GM12878 (cell line): ENCODE measurements at regions of chr9 and their contacts with region 1.

Region 1: DNA sequence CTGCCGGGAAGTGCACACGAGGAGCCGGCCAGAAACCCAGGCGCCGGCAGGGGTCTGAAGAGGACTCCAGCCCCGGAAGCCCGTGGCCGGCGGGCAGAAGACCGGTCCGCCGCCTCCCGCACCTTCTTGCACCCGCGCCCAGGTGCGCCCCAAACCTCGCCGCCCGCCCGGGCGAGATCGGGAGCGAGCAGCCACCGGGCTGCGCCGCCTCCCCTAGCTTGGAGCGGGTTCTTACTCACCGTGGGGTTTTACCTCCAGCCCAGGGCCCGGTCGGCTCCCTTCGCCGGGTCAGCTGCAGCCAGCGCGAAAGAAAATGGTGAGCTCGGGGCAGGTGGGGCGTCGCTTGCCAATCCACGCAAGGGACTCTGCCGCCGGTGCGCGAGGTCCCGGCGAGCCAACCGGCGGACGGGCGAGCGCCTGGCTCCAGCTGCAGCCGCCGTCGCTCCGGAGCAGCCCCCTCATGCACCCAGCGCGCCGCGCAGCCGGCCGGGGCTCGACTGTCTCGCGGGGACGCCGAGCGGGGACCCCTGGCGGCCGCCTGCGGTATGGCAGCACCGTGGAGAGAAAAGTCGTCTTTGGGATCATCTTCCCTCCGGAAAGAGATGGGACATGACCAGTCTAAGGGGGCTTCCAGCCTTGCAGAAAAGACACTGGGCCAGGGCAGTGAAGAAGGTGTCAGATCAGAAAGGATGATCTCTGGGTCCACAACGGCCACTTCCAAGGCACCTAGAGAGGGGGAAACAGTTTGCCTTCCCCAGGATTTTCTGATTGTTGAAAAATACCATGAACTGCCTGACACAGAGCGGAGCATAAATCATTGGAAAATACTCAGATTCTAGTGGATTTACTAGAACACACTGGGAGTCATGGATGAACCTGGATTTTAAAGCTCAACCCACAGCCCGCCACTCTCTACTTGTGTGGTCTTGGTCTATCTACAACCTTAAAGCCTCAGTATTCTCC is at the start of gene MOB3B:
- DNase-seq: no peak
- ATAC-seq: peak; percentile 85
- H3K4me3 ChIP-seq: peak within 1 kb of the TSS; percentile 85
- H3K27ac ChIP-seq: peak within 1 kb of the TSS; percentile 33; the same call in 1 of the 2 replicates
- H3K4me1 ChIP-seq: no peaks in the 10 kb centered on the region; the same call in none of the 2 replicates
- H3K27me3 ChIP-seq: no peaks in the 10 kb centered on the region
- CTCF ChIP-seq: peak; percentile 83 to 89 (median 88)
- EP300 ChIP-seq: no peak
- POLR2A ChIP-seq: 0 out of 2 replicates have a peak, but pooled peaks have one; percentile 35
- RAD21 ChIP-seq: peak; percentile 82
- polyA plus RNA-seq, gene MOB3B: 0.44 to 0.85 TPM

Region 2: DNA sequence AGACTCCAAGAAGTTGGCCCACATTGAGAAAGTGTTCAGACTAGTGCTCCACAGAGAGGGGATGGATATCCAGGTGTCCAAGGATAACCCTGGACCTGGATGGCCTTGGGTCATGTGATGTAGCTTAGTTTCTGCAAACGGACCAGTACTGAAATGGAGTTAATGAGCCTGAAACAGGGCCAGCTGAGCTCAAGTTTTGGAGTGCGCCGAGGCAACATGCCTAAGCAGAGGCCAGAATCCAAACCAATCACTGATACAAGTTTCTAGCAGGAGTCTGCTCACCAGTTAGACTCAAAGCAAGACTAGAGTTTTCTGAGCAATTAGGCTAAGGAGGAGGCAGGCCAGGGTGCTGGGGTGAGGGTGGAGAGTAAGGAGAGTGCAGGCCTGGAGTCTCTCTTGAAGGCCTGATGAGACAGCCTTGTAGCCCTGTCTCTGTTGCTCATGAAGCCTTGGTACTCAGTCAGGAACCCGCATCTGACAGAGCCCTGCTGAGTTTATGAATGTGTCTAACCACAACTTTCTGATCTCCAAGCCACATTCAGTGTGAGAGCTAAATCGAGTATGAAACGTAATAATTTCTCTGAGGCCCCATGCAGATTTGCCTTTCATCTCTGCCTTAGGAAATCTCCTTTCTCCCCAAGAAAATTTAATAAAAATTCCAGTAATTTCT is 163.8 kb before region 1 on chr9:
- CTCF ChIA-PET with region 1: interaction called, 15 read pairs
- POLR2A ChIA-PET with region 1: interaction called, 5 read pairs
- RAD21 ChIA-PET with region 1: interaction called, 16 read pairs
- SMC1A ChIA-PET with region 1: interaction called, 30 read pairs
- in situ Hi-C with region 1: no loop called
- intact Hi-C with region 1: no loop called
- DNase-seq: peak; percentile 74
- ATAC-seq: peak; percentile 91
- H3K4me3 ChIP-seq: peak overlapping the region; percentile 51; the same call in 1 of the 2 replicates
- H3K27ac ChIP-seq: peak overlapping the region; percentile 71
- H3K4me1 ChIP-seq: peaks cover 40% of the 10 kb centered on the region
- H3K27me3 ChIP-seq: no peaks in the 10 kb centered on the region; a peak in 1 of 4 replicates
- CTCF ChIP-seq: no peak
- EP300 ChIP-seq: 0 out of 4 replicates have a peak, but pooled peaks of 1 of the 2 experiments have one; percentile 10
- POLR2A ChIP-seq: no peak
- RAD21 ChIP-seq: no peak

Region 3: DNA sequence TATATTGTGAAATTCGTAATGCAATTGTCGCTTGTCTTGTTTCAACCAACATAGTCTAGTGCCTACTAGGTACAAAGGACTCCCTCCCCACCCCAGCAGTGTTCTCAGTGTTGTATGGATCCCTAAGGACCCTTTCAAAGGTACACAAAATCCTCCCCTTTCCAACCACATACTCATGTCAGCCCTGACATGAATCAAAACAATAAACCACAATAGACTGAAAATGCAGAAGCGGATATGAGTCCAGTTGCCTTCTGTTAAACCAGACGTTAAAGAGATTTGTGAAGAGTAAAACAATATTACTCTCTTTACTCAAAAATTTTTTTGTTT is 87.9 kb before region 1 on chr9:
- CTCF ChIA-PET with region 1: interaction called, 5 read pairs
- POLR2A ChIA-PET with region 1: no interaction called
- RAD21 ChIA-PET with region 1: no interaction called
- SMC1A ChIA-PET with region 1: no interaction called
- in situ Hi-C with region 1: no loop called
- intact Hi-C with region 1: loop called (anchors 5 kb)
- DNase-seq: peak; percentile 48
- ATAC-seq: peak; percentile 99
- H3K4me3 ChIP-seq: no peak overlapping the region
- H3K27ac ChIP-seq: no peak overlapping the region
- H3K4me1 ChIP-seq: peaks cover 9% of the 10 kb centered on the region
- H3K27me3 ChIP-seq: no peaks in the 10 kb centered on the region
- CTCF ChIP-seq: no peak
- EP300 ChIP-seq: peak; percentile 45 to 47; a peak in 2 of 4 replicates
- POLR2A ChIP-seq: no peak
- RAD21 ChIP-seq: no peak

Region 4: DNA sequence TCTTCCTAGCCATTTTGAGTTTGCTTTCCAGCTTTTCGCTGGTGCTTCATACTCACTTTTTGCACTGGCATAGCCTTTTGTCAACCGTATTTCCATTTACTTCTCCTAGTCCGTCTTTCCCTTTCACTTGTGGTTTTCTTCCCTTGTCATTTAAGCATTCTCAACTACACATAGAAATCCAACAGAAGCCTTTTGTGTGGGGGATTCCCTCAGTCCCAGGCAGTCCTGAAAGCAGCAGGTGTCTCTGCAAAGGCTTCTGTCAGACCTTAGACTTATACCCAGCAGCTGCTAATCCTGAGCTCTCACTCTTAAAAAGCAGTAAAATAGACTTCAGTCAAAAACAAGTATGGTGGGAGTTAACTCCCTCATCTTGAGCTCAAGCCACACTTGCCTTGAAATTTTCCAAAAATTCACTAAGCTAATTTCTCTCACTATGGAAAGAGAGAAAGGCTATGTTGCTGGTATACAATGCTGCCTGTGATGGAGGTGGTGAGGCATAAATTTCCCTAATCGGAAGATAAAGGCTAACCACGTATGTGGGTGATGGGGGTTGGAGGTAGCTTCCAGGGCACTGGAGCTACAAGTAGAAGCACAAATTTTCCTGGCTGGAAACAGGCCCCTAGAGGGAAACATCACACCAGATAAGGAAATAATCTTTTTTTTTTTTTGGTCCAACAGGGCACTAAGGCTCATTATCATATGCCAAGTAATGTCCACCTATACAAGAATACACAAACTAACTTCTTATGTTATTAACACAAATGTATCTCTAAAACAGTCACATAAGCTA is 40.3 kb before region 1 on chr9:
- CTCF ChIA-PET with region 1: interaction called, 18 read pairs
- POLR2A ChIA-PET with region 1: interaction called, 4 read pairs
- RAD21 ChIA-PET with region 1: interaction called, 5 read pairs
- SMC1A ChIA-PET with region 1: interaction called, 13 read pairs
- in situ Hi-C with region 1: no loop called
- intact Hi-C with region 1: no loop called
- DNase-seq: peak; percentile 50
- ATAC-seq: peak; percentile 88
- H3K4me3 ChIP-seq: peak overlapping the region; percentile 47; the same call in 1 of the 2 replicates
- H3K27ac ChIP-seq: peak overlapping the region; percentile 52; the same call in 1 of the 2 replicates
- H3K4me1 ChIP-seq: peaks cover 41% of the 10 kb centered on the region
- H3K27me3 ChIP-seq: no peaks in the 10 kb centered on the region
- CTCF ChIP-seq: no peak
- EP300 ChIP-seq: no peak
- POLR2A ChIP-seq: no peak
- RAD21 ChIP-seq: 0 out of 2 replicates have a peak, but pooled peaks have one; percentile 4

Region 5: DNA sequence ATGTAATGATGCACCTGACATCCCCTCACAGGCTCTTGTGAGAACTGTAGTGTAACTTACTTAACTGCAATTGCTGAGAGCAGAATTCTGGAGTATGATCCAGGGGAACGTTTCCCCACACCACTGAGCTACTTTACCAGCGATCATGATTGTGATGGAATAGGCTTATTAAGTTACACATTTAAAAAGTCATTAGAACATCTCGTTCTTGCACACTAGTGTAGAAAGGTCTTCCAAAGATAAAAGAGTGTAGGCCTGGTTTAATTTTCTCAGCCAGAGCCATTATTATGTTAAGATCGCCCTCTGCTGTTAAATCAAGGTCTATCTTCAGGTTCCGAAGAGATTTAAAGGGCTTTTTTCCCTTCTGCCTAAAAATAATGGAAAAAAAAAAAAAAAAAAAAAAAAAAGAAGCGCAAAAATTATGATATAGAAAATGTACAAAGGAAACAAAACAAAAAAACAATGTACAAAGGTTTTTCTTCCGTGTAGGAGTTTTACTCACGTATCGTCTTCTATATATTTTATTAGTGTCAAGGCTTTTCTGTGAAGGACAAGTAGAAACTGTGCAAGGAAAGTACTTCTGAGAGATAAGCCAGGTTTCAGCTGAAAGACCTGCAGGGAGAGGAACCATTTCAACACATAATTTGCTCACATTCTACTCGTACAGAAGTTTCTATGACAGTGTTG is 18.6 kb after region 1 on chr9:
- CTCF ChIA-PET with region 1: interaction called, 66 read pairs
- POLR2A ChIA-PET with region 1: no interaction called
- RAD21 ChIA-PET with region 1: interaction called, 8 read pairs
- SMC1A ChIA-PET with region 1: interaction called, 89 read pairs
- in situ Hi-C with region 1: no loop called
- intact Hi-C with region 1: no loop called
- DNase-seq: no peak
- ATAC-seq: peak; percentile 74
- H3K4me3 ChIP-seq: no peak overlapping the region
- H3K27ac ChIP-seq: no peak overlapping the region
- H3K4me1 ChIP-seq: no peaks in the 10 kb centered on the region
- H3K27me3 ChIP-seq: no peaks in the 10 kb centered on the region
- CTCF ChIP-seq: peak; percentile 24 to 58 (median 30); a peak in 3 of 6 replicates
- EP300 ChIP-seq: no peak
- POLR2A ChIP-seq: no peak
- RAD21 ChIP-seq: peak; percentile 75

Region 6: GRCh38 chr9:27581826-27582225 is 52.2 kb after region 1 on chr9:
- CTCF ChIA-PET with region 1: no interaction called
- POLR2A ChIA-PET with region 1: no interaction called
- RAD21 ChIA-PET with region 1: no interaction called
- SMC1A ChIA-PET with region 1: no interaction called
- in situ Hi-C with region 1: no loop called
- intact Hi-C with region 1: no loop called
- DNase-seq: no peak
- ATAC-seq: no peak
- H3K4me3 ChIP-seq: no peak overlapping the region
- H3K27ac ChIP-seq: no peak overlapping the region
- H3K4me1 ChIP-seq: peaks cover 3% of the 10 kb centered on the region; the same call in 1 of the 2 replicates
- H3K27me3 ChIP-seq: no peaks in the 10 kb centered on the region
- CTCF ChIP-seq: no peak
- EP300 ChIP-seq: no peak
- POLR2A ChIP-seq: no peak
- RAD21 ChIP-seq: no peak

Region 7: GRCh38 chr9:27610622-27611021 is 81.0 kb after region 1 on chr9:
- CTCF ChIA-PET with region 1: no interaction called
- POLR2A ChIA-PET with region 1: no interaction called
- RAD21 ChIA-PET with region 1: no interaction called
- SMC1A ChIA-PET with region 1: no interaction called
- in situ Hi-C with region 1: no loop called
- intact Hi-C with region 1: no loop called
- DNase-seq: no peak
- ATAC-seq: no peak
- H3K4me3 ChIP-seq: no peak overlapping the region
- H3K27ac ChIP-seq: no peak overlapping the region
- H3K4me1 ChIP-seq: no peaks in the 10 kb centered on the region
- H3K27me3 ChIP-seq: no peaks in the 10 kb centered on the region; a peak in 1 of 4 replicates
- CTCF ChIP-seq: no peak
- EP300 ChIP-seq: no peak
- POLR2A ChIP-seq: no peak
- RAD21 ChIP-seq: no peak